ENCODE measurements at regions of chr9 and their contacts with region 1.

Region 1: GRCh38 chr9:112061152-112061740 is 113.9 kb downstream of the SUSD1 start:
- DNase-seq: peak; percentile 80 to 81
- ATAC-seq: peak; percentile 69 to 74
- H3K4me3 ChIP-seq: no peak overlapping the region
- H3K27ac ChIP-seq: peak overlapping the region; percentile 74 to 83
- H3K4me1 ChIP-seq: peaks cover 50% of the 10 kb centered on the region
- CTCF ChIP-seq: no peak
- EP300 ChIP-seq: peak in 1 of 2 experiments; percentile 38; a peak in 1 of 5 replicates
- POLR2A ChIP-seq: no peak
- RAD21 ChIP-seq: no peak

Region 2: GRCh38 chr9:111896353-111896958 is 164.8 kb before region 1 on chr9 and contains the start of gene UGCG:
- CTCF ChIA-PET with region 1: no interaction called
- POLR2A ChIA-PET with region 1: interaction called, 10 read pairs
- DNase-seq: peak; percentile 79 to 90
- ATAC-seq: peak; percentile 90 to 93
- H3K4me3 ChIP-seq: peak within 1 kb of the TSS; percentile 92
- H3K27ac ChIP-seq: peak within 1 kb of the TSS; percentile 87 to 97
- H3K4me1 ChIP-seq: peaks cover 46% of the 10 kb centered on the region
- CTCF ChIP-seq: no peak
- EP300 ChIP-seq: no peak
- POLR2A ChIP-seq: peak; percentile 97
- RAD21 ChIP-seq: 0 out of 5 replicates have a peak, but pooled peaks of 1 of the 2 experiments have one; percentile 12
- polyA plus RNA-seq, gene UGCG: 16.7 and 25.9 TPM in 2 replicates

Region 3: DNA sequence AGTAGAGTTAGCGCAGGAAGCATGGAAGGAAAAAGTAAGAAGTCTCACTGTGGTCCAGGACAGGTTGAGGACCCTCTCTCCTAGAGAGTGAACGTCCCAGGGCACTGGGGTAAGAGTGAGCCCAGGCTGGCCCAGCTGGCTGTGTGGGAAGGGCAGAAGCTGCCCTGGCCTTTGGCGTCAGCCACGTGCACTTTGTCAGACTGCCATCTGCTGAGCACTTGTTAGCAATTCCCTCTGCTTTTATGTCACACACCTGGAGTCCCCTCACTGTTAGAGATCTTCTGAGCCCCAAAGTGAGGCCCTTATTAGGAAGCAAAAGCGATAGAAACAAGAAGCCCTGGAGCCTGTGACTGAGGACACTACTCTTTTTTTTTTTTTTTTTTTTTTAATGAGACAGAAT is 85.5 kb before region 1 on chr9:
- CTCF ChIA-PET with region 1: interaction called, 3 read pairs
- POLR2A ChIA-PET with region 1: interaction called, 13 read pairs
- DNase-seq: peak in 1 of 2 experiments; percentile 59
- ATAC-seq: peak; percentile 73 to 85; a peak in 5 of 6 replicates
- H3K4me3 ChIP-seq: no peak overlapping the region
- H3K27ac ChIP-seq: peak overlapping the region; percentile 15 to 23; a peak in 4 of 6 replicates
- H3K4me1 ChIP-seq: peaks cover 11% of the 10 kb centered on the region; the same call in 1 of the 3 replicates
- CTCF ChIP-seq: peak; percentile 18; the same call in 1 of the 3 replicates
- EP300 ChIP-seq: no peak
- POLR2A ChIP-seq: no peak
- RAD21 ChIP-seq: peak; percentile 65 to 69

Measured in A549 (cell line).